ENCODE measurements at regions of chr5 and their contacts with region 1.

Region 1: DNA sequence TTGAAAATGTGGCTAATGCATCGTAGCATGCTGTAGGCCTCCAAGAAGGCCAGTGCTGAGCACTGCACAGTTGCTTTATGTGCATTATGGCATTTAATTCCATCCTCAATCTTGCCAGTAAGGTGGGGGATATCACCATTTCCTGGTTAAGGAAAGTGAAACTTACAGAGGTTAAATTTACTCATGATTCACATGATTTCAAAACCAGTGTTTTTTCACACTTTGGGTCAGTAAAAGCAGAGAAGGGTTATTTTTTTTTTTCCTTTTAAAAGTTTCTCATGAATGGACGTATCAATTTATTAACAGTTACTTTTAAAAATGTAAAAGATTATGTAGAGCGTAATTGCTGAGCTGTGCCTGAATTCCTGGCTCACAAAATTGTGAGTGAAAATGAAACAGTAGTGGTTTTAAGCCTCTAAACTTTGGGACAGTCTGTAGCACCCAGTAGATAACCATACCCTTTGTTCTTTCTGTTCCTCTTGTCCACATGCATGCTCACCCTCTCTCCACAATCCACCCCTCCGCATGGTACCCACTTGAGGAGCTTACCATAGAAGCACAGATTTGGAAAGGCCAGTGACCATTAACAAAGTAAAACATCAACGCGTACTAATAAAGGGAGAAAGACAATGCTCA is 21.2 kb downstream of the MAST4 start:
- DNase-seq: no peak
- H3K4me3 Mint-ChIP-seq: peak overlapping the region; percentile 67
- H3K27ac Mint-ChIP-seq: peak overlapping the region; percentile 70
- H3K4me1 Mint-ChIP-seq: peaks cover 28% of the 10 kb centered on the region
- H3K27me3 Mint-ChIP-seq: peaks cover 9% of the 10 kb centered on the region

Region 2: GRCh38 chr5:66570201-66570600 is 47.1 kb before region 1 on chr5:
- intact Hi-C with region 1: no loop called
- DNase-seq: no peak
- H3K4me3 Mint-ChIP-seq: no peak overlapping the region
- H3K27ac Mint-ChIP-seq: no peak overlapping the region
- H3K4me1 Mint-ChIP-seq: peaks cover 12% of the 10 kb centered on the region
- H3K27me3 Mint-ChIP-seq: peaks cover 26% of the 10 kb centered on the region

Region 3: DNA sequence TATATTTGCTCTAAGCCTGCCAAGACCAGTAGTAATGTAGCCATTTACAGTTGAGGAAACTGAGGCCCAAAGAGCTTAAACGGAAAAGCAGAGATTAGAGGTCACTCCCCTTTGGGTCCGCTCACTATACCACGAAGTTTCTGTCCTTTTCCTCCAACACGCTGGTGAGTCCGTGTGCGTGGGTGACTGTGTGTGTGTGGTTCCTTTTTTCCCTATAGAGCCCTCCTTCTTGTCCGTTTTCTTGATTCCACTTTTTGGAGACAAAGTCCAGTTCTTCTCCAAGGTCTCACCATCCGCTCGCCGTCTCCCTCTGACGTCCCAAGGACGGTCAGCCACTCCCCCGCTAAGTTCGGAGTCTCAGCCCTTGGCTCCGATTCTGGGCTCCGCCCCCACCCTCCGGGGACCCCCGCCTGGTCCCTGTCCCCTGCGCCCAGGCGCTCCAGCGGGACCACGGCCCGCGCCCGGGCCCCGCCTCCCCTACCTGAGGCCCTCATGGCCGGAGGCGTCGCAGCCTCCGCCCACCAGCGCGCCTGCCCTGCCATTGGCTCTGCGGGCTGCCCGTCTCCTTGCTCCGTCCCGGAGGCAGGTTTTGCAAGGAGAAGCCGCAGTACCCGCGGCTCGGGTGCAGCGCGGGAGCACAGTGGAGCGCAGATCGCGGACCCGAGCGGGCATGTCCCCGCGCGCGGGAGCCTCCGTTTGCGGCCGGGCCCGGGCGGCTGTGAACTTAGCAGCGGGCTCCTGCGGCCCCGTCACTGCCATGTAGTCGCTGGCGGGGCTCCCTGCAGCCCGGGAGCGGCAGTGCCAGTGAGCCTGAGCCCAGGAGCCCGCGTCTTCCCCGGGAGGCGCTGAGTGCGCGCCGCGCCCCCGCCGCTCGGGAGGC is 21.3 kb before region 1 on chr5 and contains the start of gene MAST4:
- intact Hi-C with region 1: loop called (anchors 2 kb)
- DNase-seq: peak; percentile 94
- H3K4me3 Mint-ChIP-seq: peak within 1 kb of the TSS; percentile 88
- H3K27ac Mint-ChIP-seq: peak within 1 kb of the TSS; percentile 2
- H3K4me1 Mint-ChIP-seq: peaks cover 25% of the 10 kb centered on the region
- H3K27me3 Mint-ChIP-seq: peaks cover 71% of the 10 kb centered on the region
- total RNA-seq, gene MAST4: 16.1 and 18.3 TPM in 2 replicates

Region 4: GRCh38 chr5:66606713-66607112 is 10.6 kb before region 1 on chr5:
- intact Hi-C with region 1: no loop called
- DNase-seq: no peak
- H3K4me3 Mint-ChIP-seq: no peak overlapping the region
- H3K27ac Mint-ChIP-seq: no peak overlapping the region
- H3K4me1 Mint-ChIP-seq: no peaks in the 10 kb centered on the region
- H3K27me3 Mint-ChIP-seq: peaks cover 36% of the 10 kb centered on the region

Measured in activated CD4-positive, alpha-beta T cell treated with anti-CD3 and anti-CD28 coated beads, Interleukin-2, amount 10 ng/mL, durations not matched to agents 24 days and 14 days (primary cell).